ENCODE measurements at regions of chr1 and their contacts with region 1.

Region 1: DNA sequence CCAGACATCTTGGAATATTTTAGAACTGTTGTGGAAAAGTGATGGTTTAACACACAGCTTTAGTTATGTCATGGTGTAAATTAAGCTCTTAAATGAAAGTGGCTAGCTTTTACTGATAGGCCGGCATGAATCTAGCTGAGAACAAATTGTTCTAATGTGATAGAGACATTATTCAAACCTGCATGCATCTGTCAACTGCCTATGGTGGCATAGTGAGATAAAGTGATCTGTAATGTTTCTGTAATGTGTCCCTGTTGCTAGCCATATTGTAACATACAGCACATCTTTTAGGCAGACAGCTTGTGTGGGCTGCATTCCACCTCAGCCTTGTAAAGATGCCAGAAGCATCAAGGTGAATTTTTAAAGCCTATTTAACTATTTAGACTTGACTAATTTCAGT is 16.0 kb downstream of the LRIG2 start:
- DNase-seq: no peak
- H3K4me3 ChIP-seq: no peak overlapping the region
- H3K27ac ChIP-seq: no peak overlapping the region
- H3K4me1 ChIP-seq: no peaks in the 10 kb centered on the region
- H3K27me3 ChIP-seq: no peaks in the 10 kb centered on the region
- CTCF ChIP-seq: no peak

Region 2: DNA sequence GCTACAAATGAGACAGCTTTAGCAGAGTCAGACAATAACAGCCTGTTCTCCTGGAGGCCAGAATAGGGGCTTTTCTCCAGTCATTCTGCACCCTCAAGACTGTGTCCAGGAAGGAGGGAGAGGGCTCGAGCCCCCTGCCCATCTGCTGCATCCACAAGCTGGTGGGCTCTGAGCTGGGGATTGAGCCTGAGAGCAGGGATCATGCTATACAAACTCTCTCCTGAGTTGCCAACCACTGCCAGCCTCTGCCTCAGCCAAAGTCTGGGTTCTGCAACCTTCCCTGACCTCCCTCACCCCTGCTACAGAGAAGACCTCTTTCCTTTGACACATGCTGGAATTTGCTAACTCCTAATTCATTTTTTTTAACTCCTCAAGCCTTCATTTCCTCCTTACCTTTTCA is 359.1 kb before region 1 on chr1:
- CTCF ChIA-PET with region 1: interaction called, 11 read pairs
- POLR2A ChIA-PET with region 1: no interaction called
- intact Hi-C with region 1: no loop called
- DNase-seq: no peak
- H3K4me3 ChIP-seq: no peak overlapping the region
- H3K27ac ChIP-seq: no peak overlapping the region
- H3K4me1 ChIP-seq: no peaks in the 10 kb centered on the region
- H3K27me3 ChIP-seq: no peaks in the 10 kb centered on the region
- CTCF ChIP-seq: no peak